CD4-positive, alpha-beta T cell (primary cell): ENCODE measurements at regions of chr1 and their contacts with region 1.

Region 1: DNA sequence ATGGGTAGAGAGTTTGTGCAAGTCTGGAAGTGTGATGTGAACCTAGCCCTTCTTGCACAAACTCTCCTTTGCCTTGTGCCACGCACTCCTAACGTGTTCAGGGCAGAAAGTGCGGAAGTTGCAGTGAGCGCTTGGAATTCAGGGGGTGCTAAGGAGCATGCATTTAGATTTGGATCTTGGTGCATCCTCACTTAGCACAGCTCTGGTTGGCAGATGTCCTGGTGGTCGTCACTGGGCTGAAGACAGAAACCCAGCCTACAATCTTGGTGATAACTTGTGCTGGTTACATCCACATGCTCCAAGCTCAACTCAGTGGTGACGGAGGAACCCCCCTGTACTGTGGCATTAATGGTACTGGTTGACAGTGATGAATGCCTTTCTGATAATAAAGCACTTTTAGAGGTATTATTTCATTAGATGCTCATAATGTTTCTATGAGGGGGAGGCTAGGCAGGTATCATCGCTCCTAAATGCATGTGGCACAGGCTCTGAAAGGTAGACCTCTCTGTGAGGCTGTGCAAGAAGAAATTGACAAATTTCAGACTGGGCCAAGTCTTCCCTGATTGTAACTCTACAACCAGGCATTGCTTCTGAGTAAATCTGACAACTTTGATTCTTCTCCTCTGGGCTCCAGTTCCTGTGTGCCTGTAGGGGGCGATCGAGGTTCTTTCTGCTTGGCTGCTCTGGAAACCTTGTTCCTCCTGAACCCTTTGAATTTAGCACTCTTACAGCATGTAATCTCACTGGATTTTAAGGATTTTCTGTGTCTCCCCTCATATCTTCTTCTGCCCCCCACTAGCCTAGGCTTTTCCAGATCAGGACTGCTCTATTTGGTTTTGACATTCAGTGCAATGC is 40.6 kb downstream of the MAPKAPK2 start:
- DNase-seq: peak; percentile 40 to 82 (median 55)
- ATAC-seq: peak; percentile 54
- H3K4me3 ChIP-seq: no peak overlapping the region
- H3K4me3 Mint-ChIP-seq: no peak overlapping the region
- H3K27ac ChIP-seq: no peak overlapping the region
- H3K27ac Mint-ChIP-seq: peak overlapping the region; percentile 62
- H3K4me1 ChIP-seq: peaks cover 51% of the 10 kb centered on the region
- H3K4me1 Mint-ChIP-seq: peaks cover 50% of the 10 kb centered on the region
- H3K27me3 ChIP-seq: no peaks in the 10 kb centered on the region
- H3K27me3 Mint-ChIP-seq: no peaks in the 10 kb centered on the region
- CTCF ChIP-seq: peak; percentile 47

Region 2: GRCh38 chr1:206703661-206704060 is 21.7 kb before region 1 on chr1:
- CTCF ChIA-PET with region 1: interaction called, 9 read pairs
- POLR2A ChIA-PET with region 1: no interaction called
- intact Hi-C with region 1: loop called in 1 of 2 experiments (anchors 2 kb)
- DNase-seq: peak in 11 of 14 experiments; percentile 19 to 92 (median 65)
- ATAC-seq: peak; percentile 90
- H3K4me3 ChIP-seq: no peak overlapping the region
- H3K4me3 Mint-ChIP-seq: peak overlapping the region; percentile 54
- H3K27ac ChIP-seq: peak overlapping the region; percentile 18 to 35
- H3K27ac Mint-ChIP-seq: peak overlapping the region; percentile 88
- H3K4me1 ChIP-seq: peaks cover 89% of the 10 kb centered on the region
- H3K4me1 Mint-ChIP-seq: peaks cover 93% of the 10 kb centered on the region
- H3K27me3 ChIP-seq: no peaks in the 10 kb centered on the region
- H3K27me3 Mint-ChIP-seq: no peaks in the 10 kb centered on the region
- CTCF ChIP-seq: no peak